ENCODE measurements at regions of chr1 and their contacts with region 1.

Region 1: DNA sequence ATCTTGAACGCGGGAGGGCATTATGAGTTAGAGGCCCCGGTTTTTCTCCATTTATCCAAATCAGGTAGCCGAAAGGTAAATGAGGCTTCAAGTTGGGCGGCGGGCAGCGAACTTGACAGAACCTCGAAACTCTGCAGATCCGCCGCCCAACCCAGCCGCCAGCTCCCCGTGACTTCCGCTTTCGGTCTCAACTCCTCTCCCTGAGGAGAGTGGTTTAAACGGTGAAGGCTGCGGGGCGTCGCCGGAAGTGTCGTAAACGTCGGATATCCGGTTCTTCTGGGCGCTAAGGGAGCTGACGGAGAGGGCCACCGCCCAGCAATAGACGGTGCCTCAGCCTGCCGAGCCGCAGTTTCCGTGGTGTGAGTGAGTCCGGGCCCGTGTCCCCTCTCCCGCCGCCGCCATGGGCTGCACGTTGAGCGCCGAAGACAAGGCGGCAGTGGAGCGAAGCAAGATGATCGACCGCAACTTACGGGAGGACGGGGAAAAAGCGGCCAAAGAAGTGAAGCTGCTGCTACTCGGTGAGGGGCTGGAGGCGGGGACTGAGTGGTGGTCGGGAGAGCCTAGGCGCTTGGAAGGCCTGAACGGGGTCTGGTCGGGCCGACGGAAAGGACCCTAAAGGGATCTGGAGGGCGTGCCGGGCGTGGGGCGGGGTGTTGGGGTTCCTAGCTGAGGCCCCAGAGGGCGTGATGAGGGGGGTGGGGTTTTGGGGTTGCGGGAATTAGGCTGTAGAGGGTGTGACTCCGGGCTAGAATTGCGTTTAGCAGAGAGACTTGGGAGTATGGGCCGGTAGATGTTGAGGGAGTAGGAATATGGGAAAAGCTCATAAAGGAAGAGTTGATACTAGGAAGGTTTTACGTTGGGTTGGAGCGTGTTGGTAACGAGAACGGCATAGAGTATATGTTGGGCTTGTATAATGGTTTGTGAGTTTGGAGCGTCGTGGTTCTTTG is at the start of gene GNAI3:
- DNase-seq: peak; percentile 96
- H3K4me3 Mint-ChIP-seq: peak within 1 kb of the TSS; percentile 83
- H3K27ac Mint-ChIP-seq: peak within 1 kb of the TSS; percentile 98
- H3K4me1 Mint-ChIP-seq: peaks cover 13% of the 10 kb centered on the region
- H3K27me3 Mint-ChIP-seq: no peaks in the 10 kb centered on the region
- CTCF ChIP-seq: no peak
- total RNA-seq, gene GNAI3: 8.0 and 8.6 TPM in 2 replicates

Region 2: GRCh38 chr1:109532365-109533136 is 16.0 kb before region 1 on chr1:
- CTCF ChIA-PET with region 1: interaction called, 73 read pairs
- POLR2A ChIA-PET with region 1: interaction called, 11 read pairs
- intact Hi-C with region 1: no loop called
- DNase-seq: peak; percentile 78
- H3K4me3 Mint-ChIP-seq: no peak overlapping the region
- H3K27ac Mint-ChIP-seq: no peak overlapping the region
- H3K4me1 Mint-ChIP-seq: no peaks in the 10 kb centered on the region
- H3K27me3 Mint-ChIP-seq: no peaks in the 10 kb centered on the region
- CTCF ChIP-seq: peak; percentile 81

Region 3: DNA sequence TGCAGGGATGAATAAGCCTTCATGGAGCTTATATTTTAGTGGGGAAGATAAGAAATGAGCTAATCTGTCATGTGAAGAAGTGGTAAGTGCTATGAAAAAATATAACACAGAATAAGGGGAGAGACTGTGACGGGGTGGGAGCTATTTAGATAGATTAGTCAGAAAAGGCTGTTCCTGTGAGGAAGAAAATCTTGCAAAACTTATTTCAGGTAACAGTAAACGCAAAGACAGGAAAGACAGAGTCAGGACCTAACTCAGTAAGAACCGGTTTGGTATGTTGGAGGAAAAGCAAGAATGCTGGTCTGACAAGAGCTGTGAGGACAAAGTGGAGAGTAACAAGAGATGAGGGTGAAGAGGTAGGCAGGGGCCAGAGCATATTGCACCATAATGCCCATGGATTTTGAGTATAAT is 21.8 kb after region 1 on chr1:
- CTCF ChIA-PET with region 1: interaction called, 6 read pairs
- POLR2A ChIA-PET with region 1: interaction called, 20 read pairs
- intact Hi-C with region 1: no loop called
- DNase-seq: no peak
- H3K4me3 Mint-ChIP-seq: no peak overlapping the region
- H3K27ac Mint-ChIP-seq: no peak overlapping the region
- H3K4me1 Mint-ChIP-seq: peaks cover 9% of the 10 kb centered on the region
- H3K27me3 Mint-ChIP-seq: no peaks in the 10 kb centered on the region
- CTCF ChIP-seq: no peak

Region 4: GRCh38 chr1:109610609-109611307 is 62.2 kb after region 1 on chr1:
- CTCF ChIA-PET with region 1: interaction called, 5 read pairs
- POLR2A ChIA-PET with region 1: interaction called, 99 read pairs
- intact Hi-C with region 1: no loop called
- DNase-seq: no peak
- H3K4me3 Mint-ChIP-seq: no peak overlapping the region
- H3K27ac Mint-ChIP-seq: no peak overlapping the region
- H3K4me1 Mint-ChIP-seq: no peaks in the 10 kb centered on the region
- H3K27me3 Mint-ChIP-seq: no peaks in the 10 kb centered on the region
- CTCF ChIP-seq: no peak

Region 5: GRCh38 chr1:109630081-109630897 is 81.7 kb after region 1 on chr1:
- CTCF ChIA-PET with region 1: interaction called, 12 read pairs
- POLR2A ChIA-PET with region 1: interaction called, 5 read pairs
- intact Hi-C with region 1: loop called (anchors 1 kb)
- DNase-seq: no peak
- H3K4me3 Mint-ChIP-seq: no peak overlapping the region
- H3K27ac Mint-ChIP-seq: no peak overlapping the region
- H3K4me1 Mint-ChIP-seq: no peaks in the 10 kb centered on the region
- H3K27me3 Mint-ChIP-seq: no peaks in the 10 kb centered on the region
- CTCF ChIP-seq: peak; percentile 47

Region 6: DNA sequence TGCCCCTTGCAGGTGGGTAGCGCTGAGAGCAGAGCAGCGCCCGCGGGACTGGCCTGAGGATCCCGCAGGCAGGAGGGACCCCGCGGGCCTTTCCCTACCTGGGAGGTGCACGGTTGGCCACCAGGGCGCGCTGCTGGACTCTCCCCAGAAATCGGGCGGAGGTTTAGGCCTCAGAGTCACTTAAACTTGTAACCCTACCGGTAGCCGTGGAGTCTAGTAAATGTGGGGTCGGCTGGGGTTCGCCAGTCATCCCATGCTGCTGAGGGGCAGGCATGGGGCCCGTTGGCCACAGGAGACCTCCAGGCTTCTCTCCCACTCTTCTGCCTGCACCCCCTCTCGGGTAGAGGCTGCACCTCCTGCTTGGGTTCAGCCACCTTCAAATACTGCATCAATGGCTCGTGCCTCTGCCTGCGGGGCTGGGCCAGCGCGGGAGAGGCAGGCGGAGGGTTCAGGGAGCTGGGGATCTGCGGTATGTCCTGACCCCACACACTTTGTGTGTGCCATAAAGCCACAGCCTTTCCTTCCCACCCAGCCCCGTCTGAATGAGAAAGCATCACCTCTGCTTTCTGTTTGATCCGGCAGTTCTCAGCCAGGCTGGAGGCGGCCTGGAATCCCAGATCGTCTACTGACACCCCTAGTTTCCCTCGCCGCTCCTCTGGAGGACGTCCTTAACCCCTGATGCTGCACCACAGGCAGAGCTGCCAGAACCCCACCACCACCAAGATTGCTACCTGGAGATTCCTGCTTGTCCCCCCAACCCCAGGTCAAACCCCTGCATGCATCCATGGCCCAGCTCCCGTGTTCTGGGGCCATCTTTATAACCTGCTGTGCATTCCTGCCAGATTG is 95.0 kb after region 1 on chr1:
- CTCF ChIA-PET with region 1: interaction called, 32 read pairs
- POLR2A ChIA-PET with region 1: interaction called, 31 read pairs
- intact Hi-C with region 1: loop called (anchors 1 kb)
- DNase-seq: peak; percentile 80
- H3K4me3 Mint-ChIP-seq: no peak overlapping the region
- H3K27ac Mint-ChIP-seq: no peak overlapping the region
- H3K4me1 Mint-ChIP-seq: no peaks in the 10 kb centered on the region
- H3K27me3 Mint-ChIP-seq: no peaks in the 10 kb centered on the region
- CTCF ChIP-seq: peak; percentile 85

Region 7: DNA sequence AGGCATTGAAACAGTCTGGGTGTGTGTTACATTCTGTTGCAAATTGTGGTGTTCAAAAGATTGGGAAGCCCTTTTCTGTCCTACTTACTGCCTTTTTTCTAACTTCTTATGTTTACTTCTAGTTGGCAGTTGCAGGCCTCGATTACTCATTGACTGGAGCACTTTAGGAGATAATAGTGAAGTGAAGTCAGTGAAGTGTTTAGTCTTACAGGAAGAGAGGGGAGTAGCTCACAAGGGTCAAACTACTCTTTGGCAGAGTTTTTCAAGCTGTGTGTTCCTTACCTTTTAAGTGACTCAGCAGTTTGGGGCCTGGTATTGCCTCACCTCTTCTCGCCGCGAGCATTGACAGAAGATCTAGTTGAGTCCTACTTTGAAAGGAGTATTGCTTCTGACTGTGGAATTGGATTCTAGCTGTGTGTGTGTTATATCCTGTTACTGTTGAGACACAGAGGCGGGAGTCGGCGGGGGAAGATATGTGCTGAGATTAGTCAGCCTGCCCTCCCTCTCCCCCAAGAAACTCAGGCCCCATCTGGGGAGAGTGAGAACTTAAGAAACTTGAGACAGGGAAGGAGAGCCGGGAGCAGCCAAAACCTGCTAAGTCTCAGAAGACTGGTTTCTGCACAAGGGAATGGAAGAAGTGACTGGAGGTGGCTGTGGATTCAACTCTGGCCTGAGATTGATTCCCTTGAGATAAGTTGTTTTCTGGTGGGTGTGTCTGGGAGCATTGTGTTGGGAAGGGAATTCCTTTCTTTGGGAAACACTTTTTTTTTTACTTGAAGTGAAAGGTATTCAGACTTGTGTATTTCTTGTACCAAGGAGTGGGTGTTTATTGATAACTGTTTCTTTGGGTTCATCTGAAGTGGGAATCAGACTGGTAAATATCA is 455.4 kb after region 1 on chr1:
- CTCF ChIA-PET with region 1: interaction called, 5 read pairs
- POLR2A ChIA-PET with region 1: interaction called, 19 read pairs
- intact Hi-C with region 1: no loop called
- DNase-seq: peak; percentile 99
- H3K4me3 Mint-ChIP-seq: peak overlapping the region; percentile 70
- H3K27ac Mint-ChIP-seq: peak overlapping the region; percentile 88
- H3K4me1 Mint-ChIP-seq: peaks cover 53% of the 10 kb centered on the region
- H3K27me3 Mint-ChIP-seq: no peaks in the 10 kb centered on the region
- CTCF ChIP-seq: no peak